Posterior vena cava (tissue), 2 donors: ENCODE measurements at regions of chr18 and their contacts with region 1.

Region 1: GRCh38 chr18:75393721-75394120 is 33.8 kb downstream of the SMIM21 start:
- DNase-seq: no peak

Region 2: DNA sequence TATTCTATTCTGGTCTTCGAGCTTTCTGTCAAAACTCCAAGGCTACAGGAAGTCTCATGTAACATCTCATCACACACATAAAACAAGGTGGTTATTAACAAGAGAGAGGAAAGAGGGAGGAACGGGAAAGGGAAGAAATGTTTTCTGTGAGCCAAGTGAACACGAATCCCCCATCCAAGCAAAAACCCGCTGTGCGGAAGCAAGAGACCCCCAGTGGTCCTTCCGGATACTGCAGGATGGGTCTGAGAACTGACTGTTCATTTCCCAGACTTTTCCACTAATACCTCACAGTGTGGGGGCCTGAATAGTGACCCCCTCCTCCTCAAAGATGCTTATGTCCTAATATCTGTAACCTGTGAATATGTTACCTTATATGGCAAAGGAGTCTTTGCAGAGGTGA is 917.6 kb before region 1 on chr18:
- intact Hi-C with region 1: loop called in 1 of 2 experiments (anchors 5 kb)
- DNase-seq: no peak

Region 3: DNA sequence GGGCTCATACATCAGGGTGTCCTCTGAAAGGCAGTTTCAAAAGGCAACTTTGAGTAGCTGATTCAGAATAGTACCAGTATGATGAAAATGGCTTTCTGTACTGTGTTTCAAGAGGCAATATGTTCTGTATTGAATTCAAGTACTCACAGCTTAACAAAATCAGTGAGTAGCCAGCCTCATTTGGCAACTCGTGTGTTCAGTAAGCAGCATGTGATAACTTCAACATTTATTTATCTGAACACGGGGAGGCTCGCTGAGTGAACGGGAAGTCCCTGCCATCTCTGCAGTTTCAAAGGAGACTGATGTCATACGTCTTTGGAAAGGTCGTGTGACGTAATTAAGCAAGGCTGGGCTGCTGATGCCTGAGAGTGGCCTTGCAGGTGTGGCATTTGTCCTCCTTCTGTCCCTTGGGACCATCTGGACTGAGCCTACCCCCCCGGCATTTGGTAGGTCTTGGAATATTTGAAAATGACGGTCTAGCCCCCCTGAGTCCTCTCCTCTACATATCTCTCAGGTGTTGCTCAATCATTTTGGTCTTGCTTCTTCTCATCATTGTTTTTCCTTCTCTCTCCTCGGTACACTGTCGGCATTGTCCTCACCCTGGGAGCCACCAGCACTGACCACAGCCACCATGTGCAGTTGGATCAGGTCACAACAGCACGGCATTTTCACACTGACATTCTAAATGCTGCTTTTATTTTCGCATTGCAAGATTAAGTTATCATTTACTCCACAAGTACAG is 29.0 kb before region 1 on chr18:
- intact Hi-C with region 1: no loop called
- DNase-seq: no peak